Aorta (tissue), 5 donors: ENCODE measurements at regions of chr17 and their contacts with region 1.

Region 1: DNA sequence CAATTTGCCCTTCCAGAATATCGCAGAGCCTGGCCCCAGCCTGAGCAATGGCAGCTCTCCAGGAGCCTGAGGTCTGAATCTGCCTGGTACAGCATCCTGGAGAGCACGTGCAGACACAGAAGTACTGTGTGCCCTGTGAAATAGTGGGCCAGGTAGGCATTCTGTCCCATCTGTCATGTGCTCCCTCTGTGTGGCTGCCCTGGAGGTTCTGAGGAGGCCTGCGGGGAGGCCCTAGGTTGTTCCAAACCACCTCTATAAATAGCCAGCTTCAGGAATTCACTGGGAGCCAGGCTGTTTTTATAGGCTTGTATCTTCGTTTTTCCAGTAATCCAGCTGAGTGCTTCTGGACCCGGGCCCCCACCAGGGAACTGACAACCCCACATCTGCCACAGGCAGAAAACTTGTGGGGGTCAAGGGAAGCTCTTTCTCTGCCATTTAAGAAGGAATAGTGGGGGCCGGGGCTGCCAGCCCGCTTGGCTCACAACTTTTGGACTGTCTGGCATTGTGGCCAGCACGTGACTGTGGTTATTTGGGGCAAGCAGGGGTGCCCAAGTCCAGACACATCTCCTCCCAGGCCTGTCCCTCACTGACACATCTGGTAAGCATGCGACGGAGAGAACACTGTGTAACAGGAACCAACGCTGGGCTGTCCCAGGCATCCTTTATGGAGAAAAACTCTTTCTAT is 356.3 kb upstream of the TNRC6C start:
- DNase-seq: peak; percentile 89 to 93
- ATAC-seq: peak; percentile 93
- H3K4me3 ChIP-seq: no peak overlapping the region
- H3K27ac ChIP-seq: peak overlapping the region; percentile 68 to 99
- H3K4me1 ChIP-seq: peaks cover 3 to 5% of the 10 kb centered on the region in 2 donors
- H3K27me3 ChIP-seq: no peaks in the 10 kb centered on the region

Region 2: DNA sequence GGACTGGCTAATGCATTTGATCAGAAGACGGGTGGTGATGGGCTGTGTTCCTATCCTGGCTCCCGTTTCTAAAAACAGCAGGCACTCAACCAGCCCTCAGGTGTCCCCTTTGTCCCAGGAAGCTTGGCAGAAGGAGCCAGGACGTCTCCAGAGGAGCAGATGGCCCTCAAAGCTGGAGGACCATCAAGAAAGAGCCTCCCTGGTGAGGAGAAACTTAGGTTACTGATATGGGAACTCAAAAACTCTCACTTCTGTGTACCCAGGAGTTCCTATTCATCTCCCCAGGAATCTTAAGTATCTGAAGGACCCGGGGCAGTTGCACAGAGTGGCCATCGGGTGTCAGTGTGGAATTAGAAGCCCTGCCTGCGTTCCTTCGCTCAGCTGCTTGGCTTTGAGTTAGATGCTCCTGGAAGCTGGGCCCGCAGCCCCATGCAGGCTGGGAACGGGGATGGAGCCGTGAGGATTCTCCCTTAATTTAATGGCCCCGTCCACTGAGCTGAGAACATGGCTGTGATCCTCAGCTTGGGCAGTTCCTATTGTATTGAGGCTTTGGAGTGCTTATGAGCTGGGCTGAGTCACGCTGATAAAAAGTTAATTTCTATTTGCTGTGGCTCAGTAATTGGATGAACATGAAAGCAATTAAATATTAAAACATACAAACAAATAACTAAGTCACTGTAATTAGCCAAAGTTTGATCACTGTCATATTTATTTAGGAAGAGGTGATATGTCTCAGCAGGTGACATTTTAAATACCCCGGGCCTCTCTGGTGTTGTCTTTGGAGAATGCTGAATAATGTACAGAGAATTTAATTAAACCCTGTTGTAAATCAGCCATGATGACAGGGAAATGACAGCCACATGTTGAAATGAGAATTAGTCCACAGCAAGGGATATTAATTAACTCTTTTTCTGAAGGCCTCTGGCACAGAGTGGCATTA is 59.4 kb before region 1 on chr17:
- intact Hi-C with region 1: loop called in 1 of 2 experiments (anchors 5 kb)
- DNase-seq: peak; percentile 89
- ATAC-seq: peak; percentile 94
- H3K4me3 ChIP-seq: no peak overlapping the region
- H3K27ac ChIP-seq: no peak overlapping the region
- H3K4me1 ChIP-seq: no peaks in the 10 kb centered on the region
- H3K27me3 ChIP-seq: no peaks in the 10 kb centered on the region

Region 3: DNA sequence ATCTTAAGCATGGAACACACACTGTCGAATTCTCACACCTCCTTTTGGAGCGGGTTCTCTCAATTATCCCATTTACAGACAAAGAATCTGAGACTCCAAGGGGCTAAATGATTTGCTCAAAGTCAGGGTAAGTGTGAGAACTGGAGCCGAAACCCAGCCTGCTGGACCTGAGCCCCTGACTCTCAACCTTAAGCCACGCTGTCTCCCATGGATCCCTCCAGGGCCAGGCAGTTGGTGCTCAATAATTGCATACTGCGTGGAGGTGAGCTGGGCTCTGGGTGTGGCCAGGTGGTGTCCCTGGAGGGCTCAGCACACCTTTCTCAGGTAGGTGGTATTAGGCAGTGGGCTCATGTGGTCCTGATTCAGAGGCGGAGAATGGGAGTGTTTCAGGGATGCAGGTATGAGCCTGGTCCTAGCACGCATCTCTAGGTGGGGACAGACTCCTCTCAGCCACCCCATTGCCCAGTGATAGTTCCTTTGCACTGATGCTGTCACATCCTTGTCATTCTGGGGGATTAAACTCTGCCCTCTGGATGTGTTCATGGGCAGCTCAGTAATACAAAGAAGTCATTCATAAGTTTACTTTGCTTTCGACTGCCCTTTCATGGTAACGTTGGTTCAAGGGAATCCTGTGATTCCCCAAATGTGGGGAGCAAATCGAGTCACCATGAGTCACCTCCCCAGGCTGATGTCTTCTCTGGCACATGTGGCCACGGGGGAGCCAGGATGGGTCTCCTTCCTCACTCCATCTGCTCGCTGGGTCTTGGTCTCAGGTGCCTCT is 43.2 kb before region 1 on chr17:
- intact Hi-C with region 1: no loop called
- DNase-seq: no peak
- ATAC-seq: no peak
- H3K4me3 ChIP-seq: no peak overlapping the region
- H3K27ac ChIP-seq: no peak overlapping the region
- H3K4me1 ChIP-seq: no peaks in the 10 kb centered on the region
- H3K27me3 ChIP-seq: no peaks in the 10 kb centered on the region

Region 4: GRCh38 chr17:77657839-77658238 is 55.6 kb after region 1 on chr17:
- intact Hi-C with region 1: no loop called
- DNase-seq: peak in 1 of 2 donors; percentile 47
- ATAC-seq: no peak
- H3K4me3 ChIP-seq: no peak overlapping the region
- H3K27ac ChIP-seq: no peak overlapping the region
- H3K4me1 ChIP-seq: no peaks in the 10 kb centered on the region
- H3K27me3 ChIP-seq: no peaks in the 10 kb centered on the region

Region 5: DNA sequence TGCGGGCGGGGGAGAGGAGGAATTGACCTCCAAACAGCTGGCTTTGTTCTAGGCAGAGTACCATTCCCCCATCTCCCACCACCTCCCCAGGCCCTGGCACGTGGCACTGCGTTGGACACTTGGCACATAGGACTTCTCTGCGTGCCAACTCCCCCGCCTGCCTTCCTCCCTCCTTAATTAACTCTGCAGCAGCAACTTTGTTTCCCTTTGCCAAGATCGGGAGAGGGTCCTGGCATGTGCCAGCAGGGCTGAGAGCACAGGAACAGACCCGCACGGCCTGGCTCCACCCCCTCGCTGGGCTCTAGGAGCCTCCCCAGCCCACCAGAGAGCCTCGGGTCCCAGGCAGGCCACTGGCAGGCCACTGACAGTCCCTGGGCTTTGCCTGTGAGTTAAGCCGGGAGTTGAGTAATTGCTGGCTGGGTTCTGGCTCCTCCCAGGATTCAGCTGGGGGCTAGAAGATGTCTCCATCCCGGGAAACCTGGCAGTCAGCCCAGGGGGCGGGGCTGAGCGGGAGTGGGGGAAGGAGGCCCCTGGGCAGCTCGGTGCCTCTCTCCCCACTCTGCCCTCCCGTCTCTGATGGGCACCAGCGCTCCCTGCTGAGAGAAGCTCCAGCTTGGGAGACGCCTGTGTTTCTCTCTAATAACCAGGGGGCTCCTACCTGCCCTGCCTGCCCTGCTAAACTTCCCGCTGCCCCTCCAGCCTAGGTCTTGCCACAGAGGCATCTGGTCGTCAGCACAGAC is 132.3 kb after region 1 on chr17:
- intact Hi-C with region 1: loop called in 1 of 2 experiments (anchors 5 kb)
- DNase-seq: peak; percentile 95 to 96
- ATAC-seq: peak; percentile 84
- H3K4me3 ChIP-seq: no peak overlapping the region
- H3K27ac ChIP-seq: peak overlapping the region in 1 of 2 donors; percentile 83
- H3K4me1 ChIP-seq: no peaks in the 10 kb centered on the region
- H3K27me3 ChIP-seq: no peaks in the 10 kb centered on the region

Region 6: DNA sequence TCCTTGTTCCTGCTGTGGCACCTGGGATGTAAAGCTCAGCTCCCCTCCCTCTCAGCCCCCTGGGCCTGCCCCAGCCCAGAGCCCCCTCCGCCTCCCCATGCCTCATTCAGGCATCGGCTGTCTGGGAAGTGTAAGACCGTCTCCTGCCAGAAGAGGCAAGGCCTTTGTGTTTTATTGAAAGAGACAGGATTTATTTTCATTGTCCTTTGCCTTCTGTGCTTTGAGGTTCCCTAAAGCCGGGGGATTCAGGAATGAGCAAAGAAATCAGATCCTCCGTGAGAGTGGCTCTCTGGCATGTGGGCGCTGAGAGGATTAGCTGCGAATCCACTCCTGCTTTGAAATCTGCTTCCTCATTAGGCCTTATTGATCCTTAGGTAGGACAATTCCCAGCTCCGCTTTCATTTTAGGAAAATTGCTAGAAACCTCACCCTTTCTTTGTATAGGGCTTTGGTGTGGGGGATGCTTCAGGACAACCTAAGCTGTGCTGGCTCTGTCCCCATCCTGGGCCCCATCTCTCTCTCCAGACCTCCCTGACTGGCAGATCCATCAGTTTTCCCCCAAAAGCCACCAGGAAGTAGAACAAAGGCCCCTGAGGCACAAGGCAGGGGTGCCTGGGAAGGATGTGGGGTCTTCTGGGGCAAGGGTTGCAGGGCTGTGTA is 144.8 kb after region 1 on chr17:
- intact Hi-C with region 1: no loop called
- DNase-seq: no peak
- ATAC-seq: no peak
- H3K4me3 ChIP-seq: no peak overlapping the region
- H3K27ac ChIP-seq: no peak overlapping the region
- H3K4me1 ChIP-seq: no peaks in the 10 kb centered on the region
- H3K27me3 ChIP-seq: no peaks in the 10 kb centered on the region

Region 7: GRCh38 chr17:77796176-77796860 is 194.1 kb after region 1 on chr17:
- intact Hi-C with region 1: loop called in 1 of 2 experiments (anchors 5 kb)
- DNase-seq: peak; percentile 87 to 94
- ATAC-seq: peak; percentile 92
- H3K4me3 ChIP-seq: no peak overlapping the region
- H3K27ac ChIP-seq: peak overlapping the region in 1 of 2 donors; percentile 92
- H3K4me1 ChIP-seq: no peaks in the 10 kb centered on the region
- H3K27me3 ChIP-seq: no peaks in the 10 kb centered on the region

Region 8: DNA sequence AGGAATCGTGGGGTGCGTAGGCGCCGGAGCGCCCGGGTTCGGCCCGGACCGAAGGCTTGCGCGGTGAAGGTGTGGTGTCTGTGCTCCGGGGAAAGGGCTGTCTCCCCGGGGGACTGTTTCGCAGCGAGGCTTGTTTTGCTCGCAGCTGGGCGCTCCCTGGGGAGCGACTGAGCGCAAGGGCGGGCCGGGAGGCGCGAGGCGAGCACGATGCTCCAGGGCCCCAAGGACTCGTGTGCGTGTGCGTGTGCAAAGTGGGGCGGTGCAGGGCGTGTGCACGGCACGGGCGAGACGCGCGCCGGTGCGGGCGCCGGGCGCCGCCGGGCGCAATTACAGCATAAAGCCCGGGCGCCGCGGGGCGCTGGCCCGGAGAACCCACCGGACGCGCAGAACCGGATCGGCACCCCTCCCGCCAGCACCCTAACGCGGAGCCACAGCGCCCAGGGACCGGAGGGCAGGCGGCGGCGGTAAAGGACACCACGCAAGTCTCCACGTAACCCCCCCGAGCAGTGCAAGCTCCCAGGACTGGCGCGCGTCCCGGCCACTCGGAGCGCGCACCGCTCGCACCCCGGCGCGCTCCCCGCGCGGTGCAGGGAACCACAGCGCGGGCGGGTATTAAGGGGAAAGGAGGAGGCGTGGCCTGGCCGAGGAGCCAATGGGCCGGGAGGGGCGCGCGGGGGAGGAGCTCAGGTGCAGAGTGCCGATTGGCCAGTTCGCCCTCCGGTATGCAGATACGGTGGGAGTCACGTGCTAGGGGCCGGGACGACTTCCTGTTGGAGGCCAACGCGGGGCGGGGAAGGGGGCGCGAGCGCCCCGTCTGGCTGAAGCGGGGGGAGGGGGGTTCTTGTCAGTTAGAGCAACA is 355.9 kb after region 1 on chr17 and contains the start of gene TNRC6C:
- intact Hi-C with region 1: loop called in 1 of 2 experiments (anchors 5 kb)
- DNase-seq: peak; percentile 100
- ATAC-seq: peak; percentile 99
- H3K4me3 ChIP-seq: peak within 1 kb of the TSS; percentile 98 to 99
- H3K27ac ChIP-seq: peak within 1 kb of the TSS; percentile 91 to 95
- H3K4me1 ChIP-seq: peaks cover 2 to 9% of the 10 kb centered on the region in 2 donors
- H3K27me3 ChIP-seq: no peaks in the 10 kb centered on the region
- total RNA-seq, gene TNRC6C: 45.7 to 62.2 TPM

Region 9: DNA sequence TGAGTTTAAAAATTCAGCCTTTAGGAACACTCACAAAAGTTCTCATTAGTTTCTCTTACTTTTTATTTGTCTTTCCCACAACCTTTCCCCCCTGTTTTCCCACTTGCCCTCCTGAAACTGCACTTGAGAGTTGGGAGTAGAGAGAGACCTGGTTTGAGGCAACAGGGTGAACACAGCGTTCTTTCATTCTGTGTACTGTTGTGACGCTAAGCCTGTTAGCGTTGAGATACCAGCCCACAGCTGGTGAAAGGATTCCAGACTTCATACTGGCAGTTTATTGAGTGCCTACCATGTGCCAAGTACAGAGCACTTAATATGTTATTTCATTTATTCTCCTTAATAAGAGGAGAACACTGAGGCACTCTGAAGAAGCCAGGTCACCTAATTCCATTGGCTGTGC is 366.6 kb after region 1 on chr17:
- intact Hi-C with region 1: no loop called
- DNase-seq: no peak
- ATAC-seq: no peak
- H3K4me3 ChIP-seq: no peak overlapping the region
- H3K27ac ChIP-seq: no peak overlapping the region
- H3K4me1 ChIP-seq: no peaks in the 10 kb centered on the region
- H3K27me3 ChIP-seq: no peaks in the 10 kb centered on the region